Activated T-helper 2 cell treated with anti-CD3 and anti-CD28 coated beads, Interferon-gamma antibody, Interleukin-2, Interleukin-4, amounts not matched to agents 10 μg/mL and 5 μg/mL and 100 μg/mL, durations not matched to agents 14 hours and 24 hours and 36 hours (primary cell): ENCODE measurements at regions of chr6 and their contacts with region 1.

Region 1: GRCh38 chr6:797479-798077 is 104.6 kb upstream of the EXOC2 start:
- DNase-seq: no peak
- H3K4me3 Mint-ChIP-seq: no peak overlapping the region
- H3K27ac Mint-ChIP-seq: no peak overlapping the region
- H3K4me1 Mint-ChIP-seq: no peaks in the 10 kb centered on the region
- H3K27me3 Mint-ChIP-seq: peaks cover 67% of the 10 kb centered on the region

Region 2: DNA sequence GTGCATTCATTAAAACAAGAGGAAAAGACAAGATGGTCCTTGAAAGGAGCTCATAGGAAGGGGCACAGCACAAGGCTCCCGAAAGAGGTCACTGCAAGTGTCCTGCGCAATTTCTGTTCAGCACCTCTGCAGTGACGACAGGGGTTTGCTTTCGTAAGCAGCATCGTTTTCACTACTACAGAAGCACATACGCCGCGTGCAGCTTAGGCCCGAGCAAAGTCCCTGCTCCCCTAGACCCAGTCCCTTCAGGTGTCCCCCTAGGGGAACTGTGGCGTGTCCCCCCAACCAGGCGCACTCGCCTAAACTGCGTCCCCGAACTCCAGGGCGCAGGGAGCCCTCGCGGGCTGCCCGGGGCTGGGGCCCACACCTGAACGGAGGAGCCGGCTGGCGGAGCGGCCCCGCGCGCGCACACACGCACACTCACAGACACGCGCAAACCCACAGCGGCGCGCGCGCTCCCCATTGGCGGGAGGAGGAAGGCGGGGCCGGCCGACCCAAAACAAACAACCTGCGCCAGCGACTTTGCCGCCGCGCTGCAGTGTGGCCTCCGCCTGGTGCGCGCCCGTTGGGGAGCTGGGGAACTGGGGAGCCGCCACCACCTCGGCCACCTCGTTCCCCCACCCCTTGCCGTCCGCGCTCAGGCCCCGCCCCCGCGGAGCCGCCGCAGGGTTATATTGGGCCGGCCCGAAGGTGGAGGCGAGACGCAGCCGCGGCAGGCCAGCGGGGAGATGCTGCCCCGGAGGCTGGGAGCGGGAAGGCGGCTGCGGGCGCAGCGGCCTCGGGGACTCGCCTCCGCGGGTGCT is 514.0 kb after region 1 on chr6 and contains the start of gene FOXQ1:
- intact Hi-C with region 1: loop called (anchors 5 kb)
- DNase-seq: no peak
- H3K4me3 Mint-ChIP-seq: peak within 1 kb of the TSS; percentile 67
- H3K27ac Mint-ChIP-seq: peak within 1 kb of the TSS; percentile 42
- H3K4me1 Mint-ChIP-seq: peaks cover 9% of the 10 kb centered on the region
- H3K27me3 Mint-ChIP-seq: peaks cover 73% of the 10 kb centered on the region
- total RNA-seq, gene FOXQ1: not detected in 2 replicates

Region 3: DNA sequence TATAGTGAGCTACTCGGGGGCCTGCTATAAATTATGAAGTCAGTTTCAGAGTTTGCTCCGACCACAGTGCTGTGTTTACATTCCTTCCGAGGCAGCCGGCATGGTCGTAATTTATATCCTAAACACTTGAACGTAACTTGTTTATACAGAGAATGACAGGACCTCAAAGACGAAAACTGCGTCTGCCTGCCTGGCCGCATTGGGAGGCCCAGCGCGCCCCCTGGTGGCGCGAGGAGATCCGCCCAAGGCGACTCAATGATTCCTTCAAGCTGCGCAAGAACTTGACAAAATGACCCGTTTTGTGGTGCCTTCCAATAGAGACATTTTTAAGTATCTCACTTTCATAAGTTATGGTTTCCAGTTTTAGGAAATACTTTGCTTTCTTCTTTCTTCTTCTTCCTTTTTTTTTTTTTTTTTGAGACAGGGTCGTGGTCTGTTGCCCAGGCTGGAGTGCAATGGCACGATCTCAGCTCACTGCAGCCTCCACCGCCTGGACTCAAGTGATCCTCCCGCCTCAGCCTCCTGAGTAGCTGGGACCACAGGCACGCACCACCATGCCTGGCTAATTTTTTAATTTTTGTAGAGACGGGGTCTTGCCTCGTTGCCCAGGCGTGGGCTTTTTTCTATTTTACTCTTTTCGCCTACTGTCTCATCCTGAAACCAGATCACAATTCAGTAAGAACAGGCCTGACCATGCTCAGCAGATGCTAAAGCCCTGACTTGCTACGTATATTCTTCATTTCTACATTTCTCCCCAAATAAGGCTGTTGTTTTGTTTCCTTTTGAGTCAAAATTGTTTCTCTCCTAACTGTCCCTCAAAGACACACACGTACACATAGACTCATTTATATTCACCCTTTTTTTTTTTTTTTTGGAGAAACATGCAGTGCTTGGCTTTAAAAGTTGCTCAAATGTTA is 599.6 kb after region 1 on chr6:
- intact Hi-C with region 1: loop called (anchors 1 kb)
- DNase-seq: peak; percentile 50
- H3K4me3 Mint-ChIP-seq: no peak overlapping the region
- H3K27ac Mint-ChIP-seq: no peak overlapping the region
- H3K4me1 Mint-ChIP-seq: peaks cover 9% of the 10 kb centered on the region
- H3K27me3 Mint-ChIP-seq: peaks cover 56% of the 10 kb centered on the region